Calu3 (cell line): ENCODE measurements at regions of chr1 and their contacts with region 1.

Region 1: GRCh38 chr1:55140546-55140983 is 74.6 kb downstream of the USP24 start:
- DNase-seq: peak; percentile 75
- H3K4me3 Mint-ChIP-seq: no peak overlapping the region
- H3K27ac Mint-ChIP-seq: no peak overlapping the region
- H3K4me1 Mint-ChIP-seq: no peaks in the 10 kb centered on the region
- H3K27me3 Mint-ChIP-seq: no peaks in the 10 kb centered on the region
- CTCF ChIP-seq: peak; percentile 55

Region 2: DNA sequence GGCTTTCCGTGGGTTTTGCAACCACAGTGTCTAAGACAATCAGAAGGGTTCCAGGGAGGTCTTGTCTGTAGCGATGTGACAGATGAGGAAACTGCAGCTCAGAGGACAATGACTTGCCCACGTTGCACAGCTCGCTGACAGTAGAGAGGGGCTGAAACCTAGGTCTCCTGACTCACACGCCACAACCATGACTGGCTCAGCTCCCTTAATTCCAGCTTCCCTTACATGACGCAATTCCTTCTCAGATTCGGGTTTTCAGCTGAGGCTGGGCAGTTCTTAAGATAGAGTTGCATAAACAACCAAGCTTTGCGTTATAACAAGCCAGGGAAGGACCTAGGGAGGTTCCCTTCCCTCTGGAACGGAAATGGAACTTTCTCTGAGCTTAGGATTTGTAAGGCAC is 289.8 kb before region 1 on chr1:
- CTCF ChIA-PET with region 1: no interaction called
- intact Hi-C with region 1: no loop called
- DNase-seq: no peak
- H3K4me3 Mint-ChIP-seq: no peak overlapping the region
- H3K27ac Mint-ChIP-seq: no peak overlapping the region
- H3K4me1 Mint-ChIP-seq: peaks cover 21% of the 10 kb centered on the region
- H3K27me3 Mint-ChIP-seq: no peaks in the 10 kb centered on the region
- CTCF ChIP-seq: no peak

Region 3: DNA sequence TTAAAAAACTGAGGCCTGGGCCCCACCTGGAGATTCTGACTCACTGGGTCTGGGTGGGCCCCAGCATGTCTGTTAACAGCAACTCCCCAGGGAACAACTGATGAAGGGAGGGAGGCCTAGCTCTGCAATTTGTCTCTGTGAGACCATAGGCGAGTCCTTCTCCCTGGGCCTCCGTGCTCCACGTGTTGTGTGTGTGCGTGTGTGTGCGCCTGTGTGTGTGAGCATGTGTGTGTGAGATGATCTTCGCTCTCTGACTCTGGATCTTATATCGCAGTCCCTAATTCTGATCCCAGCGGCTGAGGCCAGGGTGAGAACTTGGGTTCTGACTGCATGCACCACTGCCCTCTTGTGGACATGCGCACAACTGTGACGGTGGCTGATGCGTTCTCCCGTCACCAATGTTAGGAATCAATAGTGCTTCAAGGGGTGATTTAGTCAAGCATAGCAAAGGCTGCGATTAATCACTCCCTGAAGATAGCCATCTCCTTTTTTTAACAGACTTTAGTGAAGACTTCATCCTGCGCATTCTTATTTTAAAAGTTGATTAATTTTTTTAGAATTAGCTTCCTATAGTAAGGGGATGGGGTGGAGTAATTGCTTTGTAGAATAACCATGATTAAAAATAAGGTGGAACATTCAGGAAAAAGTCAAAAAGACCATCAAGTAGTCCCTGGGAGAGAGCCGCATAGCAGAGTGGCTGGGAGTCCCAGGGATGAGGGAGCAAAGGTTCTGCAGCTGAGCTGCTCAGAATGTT is 137.0 kb after region 1 on chr1:
- CTCF ChIA-PET with region 1: interaction called, 5 read pairs
- intact Hi-C with region 1: loop called (anchors 1 kb)
- DNase-seq: peak; percentile 81
- H3K4me3 Mint-ChIP-seq: no peak overlapping the region
- H3K27ac Mint-ChIP-seq: no peak overlapping the region
- H3K4me1 Mint-ChIP-seq: peaks cover 18% of the 10 kb centered on the region
- H3K27me3 Mint-ChIP-seq: no peaks in the 10 kb centered on the region
- CTCF ChIP-seq: peak; percentile 80